Activated CD8-positive, alpha-beta T cell treated with anti-CD3 and anti-CD28 coated beads for 36 hours (primary cell): ENCODE measurements at regions of chr15 and their contacts with region 1.

Region 1: GRCh38 chr15:50315814-50316630 is 39.0 kb downstream of the GABPB1 start:
- DNase-seq: no peak
- ATAC-seq: peak; percentile 64
- H3K4me3 Mint-ChIP-seq: no peak overlapping the region
- H3K27ac Mint-ChIP-seq: no peak overlapping the region
- H3K4me1 Mint-ChIP-seq: peaks cover 19% of the 10 kb centered on the region
- H3K27me3 Mint-ChIP-seq: no peaks in the 10 kb centered on the region
- CTCF ChIP-seq: peak; percentile 84

Region 2: GRCh38 chr15:50166216-50166615 is 149.8 kb before region 1 on chr15:
- CTCF ChIA-PET with region 1: no interaction called
- POLR2A ChIA-PET with region 1: no interaction called
- intact Hi-C with region 1: loop called (anchors 5 kb)
- DNase-seq: no peak
- ATAC-seq: no peak
- H3K4me3 Mint-ChIP-seq: no peak overlapping the region
- H3K27ac Mint-ChIP-seq: no peak overlapping the region
- H3K4me1 Mint-ChIP-seq: no peaks in the 10 kb centered on the region
- H3K27me3 Mint-ChIP-seq: peaks cover 14% of the 10 kb centered on the region
- CTCF ChIP-seq: no peak

Region 3: GRCh38 chr15:50182219-50183013 is 133.6 kb before region 1 on chr15:
- CTCF ChIA-PET with region 1: interaction called, 27 read pairs
- POLR2A ChIA-PET with region 1: no interaction called
- intact Hi-C with region 1: loop called (anchors 5 kb)
- DNase-seq: peak; percentile 63
- ATAC-seq: peak; percentile 69
- H3K4me3 Mint-ChIP-seq: peak overlapping the region; percentile 93
- H3K27ac Mint-ChIP-seq: peak overlapping the region; percentile 86
- H3K4me1 Mint-ChIP-seq: peaks cover 9% of the 10 kb centered on the region
- H3K27me3 Mint-ChIP-seq: peaks cover 20% of the 10 kb centered on the region
- CTCF ChIP-seq: peak; percentile 0

Region 4: DNA sequence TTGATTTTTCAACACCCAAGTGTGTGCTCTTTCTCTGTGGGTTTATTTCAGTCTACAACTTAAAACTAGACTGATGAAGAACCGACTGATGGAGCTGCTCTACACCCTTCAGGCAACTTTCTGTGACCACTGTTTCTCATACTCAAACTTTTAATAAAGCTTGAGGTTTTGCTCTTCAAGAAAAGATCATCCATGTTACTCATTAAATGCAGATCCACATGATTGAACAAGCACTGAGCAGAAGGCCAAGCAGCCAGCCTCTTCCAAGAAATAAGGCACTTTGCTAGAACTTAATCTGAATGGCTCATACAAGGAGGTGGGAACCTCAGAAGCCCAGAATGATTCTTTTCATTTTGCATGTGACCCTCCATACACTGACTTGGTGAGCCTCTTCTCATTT is 125.3 kb before region 1 on chr15:
- CTCF ChIA-PET with region 1: interaction called, 10 read pairs
- POLR2A ChIA-PET with region 1: no interaction called
- intact Hi-C with region 1: no loop called
- DNase-seq: no peak
- ATAC-seq: peak; percentile 49
- H3K4me3 Mint-ChIP-seq: no peak overlapping the region
- H3K27ac Mint-ChIP-seq: no peak overlapping the region
- H3K4me1 Mint-ChIP-seq: no peaks in the 10 kb centered on the region
- H3K27me3 Mint-ChIP-seq: no peaks in the 10 kb centered on the region
- CTCF ChIP-seq: no peak

Region 5: GRCh38 chr15:50256188-50257041 is 59.6 kb before region 1 on chr15:
- CTCF ChIA-PET with region 1: interaction called, 10 read pairs
- POLR2A ChIA-PET with region 1: no interaction called
- intact Hi-C with region 1: no loop called
- DNase-seq: no peak
- ATAC-seq: no peak
- H3K4me3 Mint-ChIP-seq: no peak overlapping the region
- H3K27ac Mint-ChIP-seq: no peak overlapping the region
- H3K4me1 Mint-ChIP-seq: peaks cover 26% of the 10 kb centered on the region
- H3K27me3 Mint-ChIP-seq: no peaks in the 10 kb centered on the region
- CTCF ChIP-seq: no peak

Region 6: DNA sequence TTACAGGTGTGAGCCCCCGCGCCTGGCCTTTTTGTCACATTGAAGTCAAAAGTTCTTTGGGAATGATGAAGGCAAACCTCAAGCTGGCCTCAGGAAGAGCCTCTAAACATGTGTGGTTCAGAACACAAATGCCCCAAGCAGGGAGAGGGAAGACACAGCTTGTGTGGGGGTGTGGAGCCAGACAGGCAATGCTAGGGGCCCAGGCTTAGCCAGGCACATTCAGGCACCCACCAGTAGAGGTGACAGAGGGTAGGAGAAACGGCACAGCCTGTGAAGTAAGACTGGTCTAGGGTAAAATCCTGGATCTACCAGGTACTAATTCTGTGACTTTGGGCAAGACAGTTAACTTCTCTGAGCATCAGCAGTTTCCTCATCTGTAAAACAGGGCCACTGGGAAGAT is 54.0 kb before region 1 on chr15:
- CTCF ChIA-PET with region 1: interaction called, 10 read pairs
- POLR2A ChIA-PET with region 1: no interaction called
- intact Hi-C with region 1: no loop called
- DNase-seq: peak; percentile 42
- ATAC-seq: peak; percentile 21
- H3K4me3 Mint-ChIP-seq: no peak overlapping the region
- H3K27ac Mint-ChIP-seq: peak overlapping the region; percentile 93
- H3K4me1 Mint-ChIP-seq: peaks cover 48% of the 10 kb centered on the region
- H3K27me3 Mint-ChIP-seq: peaks cover 1% of the 10 kb centered on the region
- CTCF ChIP-seq: peak; percentile 23

Region 7: GRCh38 chr15:50298340-50298739 is 17.7 kb before region 1 on chr15:
- CTCF ChIA-PET with region 1: interaction called, 15 read pairs
- POLR2A ChIA-PET with region 1: no interaction called
- intact Hi-C with region 1: no loop called
- DNase-seq: no peak
- ATAC-seq: no peak
- H3K4me3 Mint-ChIP-seq: no peak overlapping the region
- H3K27ac Mint-ChIP-seq: no peak overlapping the region
- H3K4me1 Mint-ChIP-seq: no peaks in the 10 kb centered on the region
- H3K27me3 Mint-ChIP-seq: no peaks in the 10 kb centered on the region
- CTCF ChIP-seq: no peak